ENCODE measurements at regions of chr7 and their contacts with region 1.

Region 1: GRCh38 chr7:101009629-101010028 is 10.3 kb upstream of the MUC17 start:
- DNase-seq: no peak
- H3K4me3 ChIP-seq: no peak overlapping the region
- H3K27ac ChIP-seq: no peak overlapping the region
- H3K4me1 ChIP-seq: no peaks in the 10 kb centered on the region
- H3K27me3 ChIP-seq: no peaks in the 10 kb centered on the region
- CTCF ChIP-seq: no peak

Region 2: DNA sequence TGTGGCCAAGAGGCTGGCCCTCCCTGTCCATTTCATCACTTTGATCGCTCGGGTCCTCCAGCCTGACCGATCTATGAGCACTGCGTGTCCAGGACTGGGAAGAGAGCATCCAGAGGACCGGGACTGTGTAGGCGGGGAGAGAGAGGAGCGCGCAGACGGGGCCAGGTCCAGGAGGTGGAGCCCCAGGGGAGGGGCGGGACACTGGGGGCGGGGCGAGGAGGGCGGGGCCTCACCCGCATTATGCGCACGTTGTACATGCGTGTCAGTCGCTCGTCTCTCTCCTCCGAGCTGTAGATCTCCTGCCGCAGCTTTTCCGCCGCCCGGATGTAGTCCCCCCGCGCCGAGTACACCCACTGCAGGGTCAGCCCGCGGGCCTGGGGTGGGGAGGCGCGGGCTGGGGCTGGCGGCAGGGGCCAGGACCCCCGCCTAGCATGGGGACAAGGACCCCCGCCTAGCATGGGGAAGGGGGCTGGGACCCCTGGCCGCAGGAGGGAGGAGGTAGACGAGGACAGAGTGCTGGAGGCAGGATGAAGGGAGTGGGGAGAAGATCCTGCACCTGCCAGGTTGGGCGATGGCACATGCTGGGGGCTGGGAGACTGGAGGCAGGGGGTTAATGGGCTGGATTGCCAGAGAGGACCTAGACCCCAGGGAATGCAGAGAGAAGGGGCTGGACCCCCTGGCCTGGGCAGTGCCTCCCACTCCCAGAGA is 382.9 kb before region 1 on chr7:
- CTCF ChIA-PET with region 1: no interaction called
- dilution Hi-C with region 1: no loop called
- in situ Hi-C with region 1: no loop called
- intact Hi-C with region 1: no loop called
- DNase-seq: peak; percentile 70
- H3K4me3 ChIP-seq: peak overlapping the region in 2 of 3 experiments; percentile 4 to 29
- H3K27ac ChIP-seq: no peak overlapping the region
- H3K4me1 ChIP-seq: peaks cover 4% of the 10 kb centered on the region
- H3K27me3 ChIP-seq: no peaks in the 10 kb centered on the region
- CTCF ChIP-seq: no peak

Region 3: GRCh38 chr7:100867040-100867775 is 142.4 kb before region 1 on chr7 and contains the start of gene TRIP6:
- CTCF ChIA-PET with region 1: no interaction called
- dilution Hi-C with region 1: no loop called
- in situ Hi-C with region 1: no loop called
- intact Hi-C with region 1: no loop called
- DNase-seq: peak; percentile 88
- H3K4me3 ChIP-seq: peak within 1 kb of the TSS; percentile 96 to 98 (median 97)
- H3K27ac ChIP-seq: peak within 1 kb of the TSS; percentile 95
- H3K4me1 ChIP-seq: peaks cover 30% of the 10 kb centered on the region
- H3K27me3 ChIP-seq: no peaks in the 10 kb centered on the region
- CTCF ChIP-seq: no peak
- total RNA-seq, gene TRIP6: 56.3 to 129 TPM

Region 4: DNA sequence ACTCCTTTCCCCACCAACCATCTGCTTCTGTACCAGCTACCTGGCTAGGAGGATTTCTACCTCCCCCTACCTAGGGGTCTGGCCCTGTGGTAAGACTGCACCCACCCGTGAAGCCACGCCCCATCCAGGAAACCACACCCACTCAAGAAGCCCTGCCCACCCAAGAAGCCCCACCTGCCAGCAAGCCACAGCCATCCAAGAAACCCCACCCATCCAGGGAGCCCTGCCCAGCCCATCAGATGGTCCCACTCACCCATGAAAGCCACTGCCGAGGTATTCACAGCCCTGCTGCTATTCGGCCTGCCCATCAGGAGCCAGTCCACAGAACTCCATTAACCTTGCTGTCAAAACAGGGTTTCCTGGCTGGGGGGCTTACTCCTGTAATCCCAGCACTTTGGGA is 75.9 kb before region 1 on chr7:
- CTCF ChIA-PET with region 1: no interaction called
- dilution Hi-C with region 1: no loop called
- in situ Hi-C with region 1: no loop called
- intact Hi-C with region 1: no loop called
- DNase-seq: no peak
- H3K4me3 ChIP-seq: no peak overlapping the region
- H3K27ac ChIP-seq: no peak overlapping the region
- H3K4me1 ChIP-seq: peaks cover 13% of the 10 kb centered on the region
- H3K27me3 ChIP-seq: no peaks in the 10 kb centered on the region
- CTCF ChIP-seq: no peak

Region 5: DNA sequence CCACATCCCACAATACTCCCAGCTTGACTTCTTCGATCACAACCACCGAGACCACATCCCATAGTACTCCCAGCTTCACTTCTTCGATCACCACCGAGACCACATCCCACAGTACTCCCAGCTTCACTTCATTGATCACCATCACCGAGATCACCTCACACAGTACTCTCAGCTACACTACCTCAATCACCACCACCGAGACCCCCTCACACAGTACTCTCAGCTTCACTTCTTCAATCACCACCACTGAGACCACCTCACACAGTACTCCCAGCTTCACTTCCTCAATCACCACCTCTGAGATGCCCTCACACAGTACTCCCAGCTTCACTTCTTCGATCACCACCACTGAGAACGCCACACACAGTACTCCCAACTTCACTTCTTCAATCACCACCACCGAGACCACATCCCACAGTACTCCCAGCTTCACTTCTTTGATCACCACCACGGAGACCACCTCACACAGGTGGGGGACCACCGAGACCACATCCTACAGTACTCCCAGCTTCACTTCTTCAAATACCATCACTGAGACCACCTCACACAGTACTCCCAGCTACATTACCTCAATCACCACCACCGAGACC is 51.7 kb before region 1 on chr7:
- CTCF ChIA-PET with region 1: no interaction called
- dilution Hi-C with region 1: loop called (anchors 5 kb)
- in situ Hi-C with region 1: no loop called
- intact Hi-C with region 1: no loop called
- DNase-seq: peak; percentile 23
- H3K4me3 ChIP-seq: no peak overlapping the region
- H3K27ac ChIP-seq: no peak overlapping the region
- H3K4me1 ChIP-seq: no peaks in the 10 kb centered on the region
- H3K27me3 ChIP-seq: no peaks in the 10 kb centered on the region
- CTCF ChIP-seq: no peak

Region 6: DNA sequence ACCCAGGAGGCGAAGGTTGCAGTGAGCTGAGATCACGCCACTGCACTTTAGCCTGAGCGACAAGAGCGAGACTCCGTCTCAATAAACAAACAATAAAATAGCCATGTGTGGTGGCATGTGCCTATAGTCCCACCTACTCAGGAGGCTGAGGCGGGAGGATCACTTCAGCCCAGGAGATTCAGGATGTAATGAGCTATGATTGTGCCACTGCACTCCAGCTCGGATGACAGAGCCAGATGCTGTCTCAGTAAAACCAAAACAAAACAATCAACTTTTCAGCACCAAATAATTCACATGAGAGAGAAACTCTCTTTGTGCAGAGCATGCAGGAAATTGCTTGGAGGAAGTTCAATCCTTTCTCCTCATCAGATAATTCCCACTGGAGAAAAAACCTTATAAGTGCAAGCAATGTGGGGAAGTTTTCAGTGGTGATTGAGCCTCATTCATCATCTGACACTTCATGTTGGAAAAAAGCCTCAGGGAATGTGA is 248.7 kb after region 1 on chr7:
- CTCF ChIA-PET with region 1: no interaction called
- dilution Hi-C with region 1: no loop called
- in situ Hi-C with region 1: no loop called
- intact Hi-C with region 1: no loop called
- DNase-seq: no peak
- H3K4me3 ChIP-seq: no peak overlapping the region
- H3K27ac ChIP-seq: no peak overlapping the region
- H3K4me1 ChIP-seq: no peaks in the 10 kb centered on the region
- H3K27me3 ChIP-seq: no peaks in the 10 kb centered on the region
- CTCF ChIP-seq: no peak